GM13977 (cell line): ENCODE measurements at regions of chr1 and their contacts with region 1.

Region 1: GRCh38 chr1:204806943-204807687 is 63.5 kb upstream of the NFASC start:
- DNase-seq: peak; percentile 86
- CTCF ChIP-seq: peak; percentile 99

Region 2: DNA sequence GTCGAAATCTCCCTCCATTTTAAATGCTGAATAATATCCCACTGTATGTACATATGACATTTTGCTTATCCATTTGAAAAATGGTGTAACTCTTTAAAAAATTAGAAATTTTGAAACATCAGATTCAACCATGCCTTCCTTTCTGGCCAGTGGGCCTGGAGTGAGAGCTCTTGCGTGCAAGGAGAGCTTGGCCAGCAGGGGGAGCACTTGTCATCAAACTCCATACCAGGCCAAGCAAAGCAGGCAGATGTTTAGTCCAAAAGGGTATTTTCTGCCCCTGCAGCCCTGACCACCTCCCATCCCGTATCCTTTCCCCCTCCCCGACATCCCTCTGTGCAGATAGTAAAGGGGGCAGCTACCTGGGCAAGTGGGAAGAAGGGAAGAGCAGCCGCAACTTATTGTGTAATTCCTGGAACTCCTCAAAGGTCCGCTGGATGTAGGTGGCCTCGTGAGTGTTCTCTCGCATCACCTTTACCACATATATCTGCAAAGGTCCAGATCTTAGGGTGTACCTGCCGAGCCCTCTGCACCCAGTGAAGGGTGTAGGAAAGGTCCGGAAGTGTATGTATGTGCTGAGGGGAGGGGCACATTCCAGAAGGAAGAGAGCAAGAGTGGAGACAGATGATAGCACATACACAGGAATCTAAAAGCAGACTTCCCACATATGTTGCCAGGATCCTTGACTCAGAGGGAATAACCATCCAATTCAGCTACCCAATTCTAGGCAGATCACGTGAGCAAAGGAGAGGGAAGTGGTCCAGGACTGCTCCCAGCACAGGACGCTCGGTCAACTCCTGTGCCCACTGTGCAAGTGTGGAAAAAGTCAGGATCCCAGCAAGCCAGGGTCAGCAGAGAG is 375.6 kb before region 1 on chr1:
- in situ Hi-C with region 1: loop called (anchors 10 kb)
- DNase-seq: peak; percentile 84
- CTCF ChIP-seq: peak; percentile 92

Region 3: DNA sequence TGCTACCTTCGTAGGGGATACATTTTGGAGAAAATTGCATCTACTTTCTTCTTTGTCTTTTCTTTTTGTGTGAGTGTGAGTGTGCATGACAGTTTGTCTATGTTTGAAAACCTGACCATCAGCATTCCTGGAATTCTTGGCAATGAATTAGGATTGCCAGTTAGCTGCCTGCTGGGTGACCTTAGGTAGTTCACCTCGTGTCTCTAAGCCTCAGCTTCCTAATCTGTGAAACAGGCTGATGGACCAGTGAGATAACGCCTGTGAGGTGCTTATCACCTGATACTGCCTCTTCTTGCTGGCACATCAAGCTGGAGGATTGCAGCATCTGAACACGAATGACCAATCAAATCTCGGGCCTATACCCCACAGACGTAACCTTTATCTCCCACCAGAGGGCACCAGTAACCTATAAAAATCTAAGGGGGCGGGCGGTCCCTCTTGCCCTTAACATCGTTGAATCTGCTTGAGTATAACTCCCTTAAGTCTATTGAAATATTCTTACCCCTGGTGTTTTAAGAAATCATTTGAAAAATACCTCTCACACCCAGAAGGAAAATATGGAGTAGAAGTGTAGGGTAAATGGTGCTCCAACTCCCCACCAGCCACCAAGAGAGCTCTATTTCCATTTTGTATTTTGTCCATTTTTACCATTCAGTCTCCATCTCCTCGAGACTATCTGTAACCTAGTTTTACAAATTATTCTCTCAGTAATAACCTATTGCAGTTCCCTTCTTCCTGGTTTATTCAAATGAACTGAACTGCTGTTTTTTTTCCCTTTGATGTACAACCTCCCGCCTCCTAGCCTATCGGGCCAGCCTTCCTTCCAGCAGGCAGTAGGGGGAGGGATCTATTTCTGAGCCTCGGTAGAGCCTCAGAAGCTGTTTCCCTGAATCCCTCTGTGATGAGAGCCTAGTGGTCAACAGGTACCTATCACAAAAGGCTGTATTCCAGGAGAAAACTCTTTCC is 241.2 kb before region 1 on chr1:
- in situ Hi-C with region 1: loop called (anchors 10 kb)
- DNase-seq: peak; percentile 85
- CTCF ChIP-seq: peak; percentile 57

Region 4: DNA sequence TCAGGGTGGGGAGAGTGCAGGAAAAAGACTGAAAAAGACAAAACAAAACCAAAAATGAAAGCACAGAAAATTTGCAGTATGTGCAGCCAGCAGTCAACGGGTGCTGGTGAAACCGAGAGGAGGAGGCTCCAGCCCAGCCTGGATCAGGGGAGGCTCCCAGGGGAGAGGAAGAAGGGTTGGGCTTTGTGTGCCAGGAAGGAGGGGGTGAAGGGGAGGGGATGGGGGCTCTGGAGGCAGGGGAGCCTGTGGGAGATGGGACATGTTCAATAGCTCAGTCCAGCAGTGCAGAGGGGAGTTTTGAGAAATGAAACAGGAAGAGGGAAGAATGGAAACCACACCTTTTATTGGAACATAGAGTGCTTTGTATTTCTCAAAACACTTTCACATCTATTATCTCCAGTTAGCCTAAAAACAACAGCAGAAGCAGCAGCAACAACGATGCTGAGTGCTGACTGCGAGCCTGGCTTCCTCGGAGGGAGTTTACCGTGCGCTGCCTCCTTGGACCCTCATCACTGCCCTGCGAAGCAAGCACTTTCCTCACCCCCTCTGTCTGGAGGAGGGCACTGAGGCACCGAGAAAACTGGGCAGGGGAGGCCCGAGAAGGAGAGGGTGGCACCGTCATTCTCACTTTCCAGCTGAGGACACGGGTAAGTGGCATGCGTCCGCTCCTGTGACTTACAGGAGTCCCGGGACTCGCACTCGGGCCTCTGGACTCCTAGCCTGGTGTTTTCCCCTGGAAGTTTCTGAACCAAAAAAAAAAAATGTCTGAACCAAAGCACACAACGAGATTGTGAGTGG is 228.0 kb before region 1 on chr1:
- in situ Hi-C with region 1: no loop called
- DNase-seq: peak; percentile 71
- CTCF ChIP-seq: no peak

Region 5: GRCh38 chr1:206419783-206420182 is 1612.7 kb after region 1 on chr1:
- in situ Hi-C with region 1: no loop called
- DNase-seq: no peak
- CTCF ChIP-seq: no peak